Gastrocnemius medialis (tissue), 4 donors: ENCODE measurements at regions of chr19 and their contacts with region 1.

Region 1: GRCh38 chr19:58002384-58003173 is at the start of gene ZNF606:
- DNase-seq: peak; percentile 69 to 76
- ATAC-seq: peak; percentile 96 to 97
- H3K4me3 ChIP-seq: peak within 1 kb of the TSS; percentile 78 to 93 (median 88)
- H3K27ac ChIP-seq: peak within 1 kb of the TSS; percentile 77 to 88 (median 87)
- H3K4me1 ChIP-seq: peaks cover 14 to 20% of the 10 kb centered on the region in 2 donors
- H3K27me3 ChIP-seq: no peaks in the 10 kb centered on the region
- CTCF ChIP-seq: peak in 1 of 5 experiments; percentile 10
- POLR2A ChIP-seq: peak; percentile 50 to 65
- total RNA-seq, gene ZNF606: 2.9 to 15.3 (median 6.6) TPM

Region 2: DNA sequence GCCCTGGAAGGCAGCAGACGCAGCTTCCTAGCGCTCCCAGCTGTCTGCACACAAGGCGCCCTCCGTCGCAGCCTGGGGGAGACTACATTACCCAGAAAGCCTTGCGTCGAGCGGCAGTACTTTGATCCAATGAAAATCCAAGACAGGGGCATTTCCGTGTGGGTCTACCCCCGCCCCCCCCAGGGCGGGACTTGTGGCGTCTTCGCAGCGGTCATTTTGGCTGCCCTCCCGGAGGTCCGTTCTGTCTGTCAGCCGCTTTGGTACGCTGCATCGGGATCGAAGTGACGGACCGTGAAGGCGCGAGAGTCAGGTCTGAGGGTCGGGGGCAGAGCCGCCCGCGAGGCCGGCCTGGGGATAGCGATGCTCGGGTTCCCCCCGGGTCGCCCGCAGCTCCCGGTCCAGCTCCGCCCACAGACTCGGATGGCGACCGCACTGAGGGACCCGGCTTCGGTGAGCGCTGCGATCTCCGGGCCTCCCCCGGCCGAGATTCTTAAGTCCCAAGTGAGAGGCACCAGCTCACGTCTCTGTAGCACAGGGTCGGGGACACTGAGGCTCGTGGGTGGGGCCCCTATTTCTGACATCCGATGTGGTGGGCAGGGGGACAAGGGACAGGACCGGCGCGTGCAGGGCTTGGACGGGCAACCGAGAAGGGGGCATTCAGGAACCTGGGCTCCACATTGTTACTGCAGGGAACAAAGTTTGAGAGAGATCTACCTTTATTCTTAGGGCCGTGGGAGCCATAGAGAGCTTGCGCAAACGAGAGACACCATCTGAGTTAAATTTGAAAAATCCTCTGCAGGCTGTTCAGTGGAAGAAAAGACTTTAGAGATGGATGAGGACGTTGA is 369.4 kb before region 1 on chr19 and contains the start of gene ZNF211:
- in situ Hi-C with region 1: no loop called
- intact Hi-C with region 1: loop called (anchors 5 kb)
- DNase-seq: peak; percentile 82 to 92
- ATAC-seq: peak; percentile 100
- H3K4me3 ChIP-seq: peak within 1 kb of the TSS; percentile 85 to 96 (median 92)
- H3K27ac ChIP-seq: peak within 1 kb of the TSS; percentile 79 to 86 (median 86)
- H3K4me1 ChIP-seq: peaks cover 7 to 13% of the 10 kb centered on the region in 2 donors
- H3K27me3 ChIP-seq: no peaks in the 10 kb centered on the region
- CTCF ChIP-seq: no peak
- POLR2A ChIP-seq: no peak
- total RNA-seq, gene ZNF211: 2.9 to 5.5 (median 4.3) TPM

Region 3: DNA sequence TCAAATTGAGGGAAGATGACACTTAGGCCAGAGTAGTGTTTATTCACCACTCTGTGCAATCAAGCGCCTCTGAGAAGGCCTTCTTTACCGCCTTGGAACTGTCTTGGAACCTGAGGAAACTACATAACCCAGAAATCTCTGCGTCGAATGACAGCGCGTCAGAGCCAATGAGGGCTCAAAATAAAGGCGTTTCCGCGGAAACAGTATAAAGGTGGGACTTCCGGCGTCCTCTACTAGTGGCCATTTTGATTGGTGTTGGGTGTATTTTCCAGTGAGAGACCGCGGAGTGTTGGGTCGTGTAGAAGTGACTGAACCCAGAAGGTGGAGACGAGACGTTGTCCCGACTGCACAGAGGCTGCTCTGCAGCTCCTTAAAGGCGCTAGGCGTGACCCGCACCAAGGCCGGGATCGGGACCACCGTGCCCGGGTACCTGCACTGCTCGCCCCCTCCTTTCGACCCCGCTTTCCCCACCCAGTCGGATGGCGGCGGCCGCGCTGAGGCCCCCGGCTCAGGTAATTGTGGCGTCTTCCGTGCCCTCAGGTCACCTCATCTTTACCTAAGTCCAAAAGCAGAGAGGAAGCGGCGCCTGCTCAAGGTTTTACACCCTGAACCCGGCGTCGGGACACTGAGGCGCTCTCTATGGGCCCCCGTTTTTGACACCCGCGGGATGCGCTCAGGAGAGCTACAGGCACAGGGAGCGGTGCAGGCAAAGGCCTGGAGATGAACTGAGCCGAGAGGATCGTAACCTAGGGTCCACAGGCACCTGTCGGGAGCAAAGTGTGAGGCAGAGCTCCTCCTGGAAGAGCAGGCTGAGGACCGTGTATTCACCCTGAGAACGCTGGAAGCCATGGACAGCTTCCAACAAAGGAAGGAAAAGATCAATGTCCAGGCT is 255.8 kb before region 1 on chr19 and contains the start of gene ZNF776:
- in situ Hi-C with region 1: no loop called
- intact Hi-C with region 1: loop called (anchors 5 kb)
- DNase-seq: peak; percentile 68 to 83
- ATAC-seq: peak; percentile 100
- H3K4me3 ChIP-seq: peak within 1 kb of the TSS; percentile 96 to 99 (median 97)
- H3K27ac ChIP-seq: peak within 1 kb of the TSS; percentile 84 to 98 (median 95)
- H3K4me1 ChIP-seq: peaks cover 23 to 38% of the 10 kb centered on the region in 2 donors
- H3K27me3 ChIP-seq: no peaks in the 10 kb centered on the region
- CTCF ChIP-seq: no peak
- POLR2A ChIP-seq: no peak
- total RNA-seq, gene ZNF776: 5.0 to 8.1 (median 8.0) TPM

Region 4: DNA sequence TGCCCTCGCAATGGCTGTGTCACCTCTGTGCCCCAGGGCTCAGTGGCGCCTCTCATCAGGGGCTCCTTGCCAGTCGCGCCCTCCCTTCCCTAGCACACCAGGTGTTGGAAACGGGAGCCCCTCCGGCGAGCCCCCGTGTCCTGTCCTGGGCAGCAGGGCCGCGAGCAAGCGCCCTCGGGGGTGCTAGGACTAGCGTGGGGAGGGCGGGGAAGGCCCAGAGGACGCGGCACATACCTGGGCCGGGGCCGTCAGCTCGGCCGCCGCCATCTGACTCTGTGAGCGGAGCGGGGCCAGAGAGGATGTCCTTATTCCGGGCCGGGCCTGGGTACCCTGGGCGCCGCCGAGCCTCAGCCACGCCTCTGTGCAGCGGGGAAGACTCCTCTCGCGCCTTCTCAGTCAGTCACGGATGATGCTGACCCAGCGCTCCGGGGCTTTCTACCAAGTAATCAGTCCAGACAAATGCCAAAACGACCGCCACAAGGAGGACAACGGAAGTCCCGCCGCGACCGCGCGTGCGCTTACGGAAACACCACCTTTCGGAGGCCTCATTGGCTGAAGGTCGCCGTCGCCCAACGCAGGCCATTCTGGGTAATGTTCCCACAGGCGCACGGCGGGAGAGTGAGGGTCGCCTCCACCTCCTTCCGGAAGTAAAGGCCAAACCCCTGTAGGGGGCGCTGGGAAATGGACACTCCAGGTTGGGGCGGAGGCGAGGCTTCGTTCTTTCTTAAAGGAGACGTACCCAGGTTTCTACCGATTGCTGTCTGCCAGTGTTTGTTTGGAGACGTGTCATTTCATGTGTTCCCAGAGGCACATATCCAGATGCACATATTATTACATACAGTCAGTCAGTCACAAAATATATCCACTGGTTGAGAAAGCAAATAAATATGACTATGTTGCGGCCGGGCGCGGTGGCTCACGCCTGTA is 55.1 kb before region 1 on chr19 and contains the start of gene ZNF256:
- in situ Hi-C with region 1: no loop called
- intact Hi-C with region 1: loop called (anchors 5 kb)
- DNase-seq: peak; percentile 87 to 95
- ATAC-seq: peak; percentile 96 to 99
- H3K4me3 ChIP-seq: peak within 1 kb of the TSS; percentile 77 to 99 (median 93)
- H3K27ac ChIP-seq: peak within 1 kb of the TSS; percentile 78 to 88 (median 85)
- H3K4me1 ChIP-seq: peaks cover 7 to 8% of the 10 kb centered on the region in 2 donors
- H3K27me3 ChIP-seq: no peaks in the 10 kb centered on the region
- CTCF ChIP-seq: peak; percentile 32 to 67 (median 62)
- POLR2A ChIP-seq: peak in 1 of 2 donors; percentile 25
- total RNA-seq, gene ZNF256: 0.93 to 2.6 (median 1.4) TPM

Region 5: DNA sequence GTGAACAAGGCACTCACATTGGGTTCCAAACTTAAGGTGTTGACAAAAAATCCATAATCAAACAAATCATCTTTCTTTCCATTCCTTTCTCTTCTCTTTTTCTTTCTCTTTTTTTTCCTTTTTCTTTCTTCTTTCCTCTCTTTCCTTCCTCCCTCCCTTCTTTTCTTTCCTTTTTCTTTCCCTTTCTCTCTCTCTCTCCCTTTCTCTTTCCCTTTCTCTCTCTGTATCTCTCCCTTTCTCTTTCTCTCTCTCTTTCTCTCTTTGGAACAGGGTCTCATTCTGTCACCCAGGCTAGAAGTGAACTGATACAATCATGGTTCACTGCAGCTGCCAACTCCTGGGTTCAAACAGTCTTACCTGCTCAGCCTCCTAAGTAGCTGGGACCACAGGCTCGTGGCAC is 40.8 kb before region 1 on chr19:
- in situ Hi-C with region 1: no loop called
- intact Hi-C with region 1: no loop called
- DNase-seq: no peak
- ATAC-seq: no peak
- H3K4me3 ChIP-seq: no peak overlapping the region
- H3K27ac ChIP-seq: no peak overlapping the region
- H3K4me1 ChIP-seq: no peaks in the 10 kb centered on the region
- H3K27me3 ChIP-seq: no peaks in the 10 kb centered on the region
- CTCF ChIP-seq: no peak
- POLR2A ChIP-seq: no peak

Region 6: DNA sequence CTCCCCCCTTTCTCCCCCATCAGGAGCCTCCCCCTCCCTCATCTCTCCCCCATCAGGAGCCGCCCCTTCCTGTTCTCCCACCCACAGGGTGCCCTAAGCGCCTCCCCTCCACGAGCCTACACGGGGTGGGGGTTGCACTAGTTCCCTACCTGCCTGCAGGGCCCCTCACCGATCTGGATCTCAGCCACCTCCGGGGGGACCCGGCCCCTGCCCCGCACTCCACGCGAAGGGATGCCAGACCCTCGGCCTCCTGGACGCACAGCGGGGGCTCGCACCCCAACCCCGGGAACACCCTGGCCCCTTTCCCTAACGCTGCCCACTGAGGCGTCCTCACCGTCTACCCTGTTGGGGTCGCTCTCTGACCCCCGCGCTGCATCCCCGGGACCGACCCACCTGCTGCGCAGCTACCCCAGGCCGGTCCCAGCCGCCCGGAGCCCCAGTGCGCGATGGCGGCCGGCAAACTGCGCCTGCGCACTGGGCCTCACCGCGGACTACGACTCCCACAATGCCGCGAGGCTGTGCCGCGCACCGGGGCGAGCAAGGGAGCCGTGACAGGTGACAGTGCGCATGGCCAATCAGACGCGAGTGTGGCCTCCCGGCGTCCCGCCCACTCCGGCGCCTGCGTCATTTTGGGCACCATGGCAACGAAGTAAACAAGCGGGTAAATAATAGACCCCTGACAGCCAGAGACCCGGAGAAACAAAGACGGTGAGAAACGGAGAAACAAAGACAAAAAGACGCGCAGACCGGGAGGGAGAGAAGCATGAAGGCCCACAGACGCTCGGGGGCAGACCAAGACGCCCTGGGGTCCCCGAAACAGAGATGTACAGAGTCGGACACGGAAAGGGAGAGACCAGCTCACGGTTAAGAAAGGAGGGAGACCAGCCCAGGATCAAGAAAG is 95.5 kb after region 1 on chr19 and contains the start of gene ZSCAN18:
- in situ Hi-C with region 1: no loop called
- intact Hi-C with region 1: loop called (anchors 2 kb)
- DNase-seq: peak; percentile 89 to 92
- ATAC-seq: peak; percentile 98 to 99
- H3K4me3 ChIP-seq: peak within 1 kb of the TSS; percentile 85 to 99 (median 98)
- H3K27ac ChIP-seq: peak within 1 kb of the TSS; percentile 83 to 89 (median 86)
- H3K4me1 ChIP-seq: peaks cover 5 to 9% of the 10 kb centered on the region in 2 donors
- H3K27me3 ChIP-seq: no peaks in the 10 kb centered on the region
- CTCF ChIP-seq: no peak
- POLR2A ChIP-seq: peak; percentile 28 to 35
- total RNA-seq, gene ZSCAN18: 11.2 to 20.6 (median 15.2) TPM

Region 7: DNA sequence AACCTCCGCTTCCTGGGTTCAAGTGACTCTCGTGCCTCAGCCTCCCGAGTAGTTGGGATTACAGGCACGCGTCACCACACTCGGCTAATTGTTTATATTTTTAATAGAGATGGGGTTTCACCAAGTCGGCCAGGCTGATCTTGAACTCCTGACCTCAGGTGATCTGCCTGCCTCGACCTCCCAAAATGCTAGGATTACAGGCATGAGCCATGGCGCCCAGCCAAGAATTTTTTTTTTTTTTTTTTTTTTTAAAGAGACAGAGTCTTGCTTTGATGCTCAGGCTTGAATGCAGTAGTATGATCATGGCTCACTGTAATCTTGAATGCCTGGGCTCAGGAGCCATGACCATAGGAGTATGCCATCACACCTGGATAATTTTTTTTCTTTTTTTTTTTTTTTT is 141.9 kb after region 1 on chr19:
- in situ Hi-C with region 1: no loop called
- intact Hi-C with region 1: no loop called
- DNase-seq: no peak
- ATAC-seq: no peak
- H3K4me3 ChIP-seq: no peak overlapping the region
- H3K27ac ChIP-seq: no peak overlapping the region
- H3K4me1 ChIP-seq: no peaks in the 10 kb centered on the region
- H3K27me3 ChIP-seq: peaks cover 0 to 7% (median 0%) of the 10 kb centered on the region in 3 donors
- CTCF ChIP-seq: no peak
- POLR2A ChIP-seq: no peak

Region 8: DNA sequence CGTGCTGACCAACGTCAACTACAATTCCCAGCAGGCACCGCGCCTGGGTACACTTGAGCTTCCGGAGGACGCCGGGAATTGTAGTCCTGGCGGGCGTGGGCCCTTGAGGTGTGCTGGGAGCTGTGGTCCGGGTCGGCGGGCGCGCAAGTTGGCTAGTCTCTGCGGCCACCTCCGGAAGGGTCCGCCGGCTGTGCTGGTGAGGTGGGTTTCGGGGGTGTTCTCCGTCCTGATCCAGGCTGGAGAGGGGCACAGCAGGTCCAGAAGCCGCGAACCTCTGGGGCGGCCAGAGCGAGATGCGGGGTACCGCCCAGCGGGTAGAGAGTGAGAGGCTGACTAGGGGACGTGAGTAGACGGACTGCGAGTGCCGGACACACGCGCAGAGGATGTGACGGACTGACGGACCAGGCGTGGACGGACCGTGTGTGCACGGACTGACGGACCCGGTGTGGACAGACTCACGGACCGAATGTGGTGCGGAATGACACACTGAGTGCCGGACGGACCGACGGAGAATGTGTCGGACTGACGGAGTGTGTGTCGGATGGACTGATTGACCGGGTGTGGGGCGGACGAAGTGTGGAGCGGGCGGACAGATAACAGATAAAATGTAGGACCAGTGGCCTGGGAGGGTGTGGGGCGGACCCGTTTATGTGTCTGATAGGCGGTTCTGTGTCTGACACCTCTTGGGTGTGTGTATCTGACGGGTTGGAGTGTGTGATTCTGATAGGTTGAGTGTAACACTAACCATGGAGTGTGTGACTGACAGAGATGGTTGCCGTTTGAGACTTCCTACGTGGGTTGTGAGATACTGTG is 324.5 kb after region 1 on chr19 and contains the start of gene ZSCAN22:
- in situ Hi-C with region 1: no loop called
- intact Hi-C with region 1: loop called (anchors 10 kb)
- DNase-seq: peak; percentile 95 to 96
- ATAC-seq: peak; percentile 98
- H3K4me3 ChIP-seq: peak within 1 kb of the TSS; percentile 91 to 96 (median 94)
- H3K27ac ChIP-seq: peak within 1 kb of the TSS; percentile 94 to 99 (median 98)
- H3K4me1 ChIP-seq: peaks cover 24 to 29% of the 10 kb centered on the region in 2 donors
- H3K27me3 ChIP-seq: no peaks in the 10 kb centered on the region
- CTCF ChIP-seq: no peak
- POLR2A ChIP-seq: peak; percentile 79 to 81
- total RNA-seq, gene ZSCAN22: 1.1 to 2.4 (median 1.8) TPM